CD4-positive, alpha-beta memory T cell (primary cell): ENCODE measurements at regions of chr19 and their contacts with region 1.

Region 1: GRCh38 chr19:18496167-18496979 is 25.5 kb downstream of the ELL start:
- DNase-seq: peak; percentile 75 to 96 (median 83)
- H3K4me3 ChIP-seq: peak overlapping the region; percentile 36 to 43
- H3K4me3 Mint-ChIP-seq: peak overlapping the region; percentile 77 to 86 (median 81)
- H3K27ac ChIP-seq: peak overlapping the region; percentile 90
- H3K27ac Mint-ChIP-seq: peak overlapping the region; percentile 95 to 98 (median 97)
- H3K4me1 ChIP-seq: peaks cover 96% of the 10 kb centered on the region
- H3K4me1 Mint-ChIP-seq: peaks cover 59 to 96% (median 81%) of the 10 kb centered on the region in 4 donors
- H3K27me3 ChIP-seq: no peaks in the 10 kb centered on the region
- H3K27me3 Mint-ChIP-seq: no peaks in the 10 kb centered on the region

Region 2: DNA sequence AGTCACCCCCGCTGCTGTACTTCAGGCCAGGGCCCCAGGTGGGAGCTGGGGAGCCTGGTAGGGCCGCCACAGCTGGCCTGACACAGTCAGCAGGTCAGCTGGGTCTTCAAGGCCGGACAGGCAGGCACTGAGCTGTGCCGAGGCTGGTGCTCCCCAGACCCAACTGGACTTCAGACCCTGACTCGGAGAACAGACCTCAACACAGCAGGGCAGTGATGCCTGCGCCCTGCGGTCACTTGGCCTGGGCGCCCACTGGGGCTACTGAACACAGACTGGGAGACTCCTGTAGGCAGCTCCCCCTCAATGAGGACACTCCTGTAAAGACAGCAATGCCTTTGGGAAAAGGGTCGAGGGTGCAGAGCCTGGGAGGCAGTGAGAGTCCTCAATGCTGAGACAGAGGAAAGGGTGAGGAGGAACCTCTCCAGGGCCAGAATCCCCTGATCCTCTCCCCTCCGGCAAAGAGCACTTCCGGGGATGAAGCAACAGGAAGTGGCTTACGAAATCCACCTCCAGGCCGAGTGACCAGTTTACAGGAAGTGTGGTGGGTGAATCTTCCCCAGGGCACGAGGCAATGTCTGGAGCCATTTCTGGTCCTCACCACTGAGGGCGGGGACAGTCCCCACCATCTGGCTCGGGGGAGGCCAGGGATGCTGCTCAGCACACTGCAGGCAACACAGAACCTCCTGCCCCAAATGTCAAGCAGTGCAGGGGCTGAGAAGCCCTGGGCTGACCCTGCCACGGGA is 17.6 kb before region 1 on chr19:
- CTCF ChIA-PET with region 1: interaction called, 7 read pairs
- POLR2A ChIA-PET with region 1: interaction called, 20 read pairs
- intact Hi-C with region 1: no loop called
- DNase-seq: peak in 3 of 5 donors; percentile 25 to 78 (median 33)
- H3K4me3 ChIP-seq: no peak overlapping the region
- H3K4me3 Mint-ChIP-seq: peak overlapping the region; percentile 53 to 80 (median 71)
- H3K27ac ChIP-seq: peak overlapping the region; percentile 63
- H3K27ac Mint-ChIP-seq: peak overlapping the region; percentile 89 to 95 (median 94)
- H3K4me1 ChIP-seq: peaks cover 88% of the 10 kb centered on the region
- H3K4me1 Mint-ChIP-seq: peaks cover 54 to 96% (median 78%) of the 10 kb centered on the region in 4 donors
- H3K27me3 ChIP-seq: no peaks in the 10 kb centered on the region
- H3K27me3 Mint-ChIP-seq: no peaks in the 10 kb centered on the region

Region 3: GRCh38 chr19:18484992-18485391 is 11.4 kb before region 1 on chr19:
- CTCF ChIA-PET with region 1: interaction called, 4 read pairs
- POLR2A ChIA-PET with region 1: interaction called, 21 read pairs
- intact Hi-C with region 1: no loop called
- DNase-seq: no peak
- H3K4me3 ChIP-seq: no peak overlapping the region
- H3K4me3 Mint-ChIP-seq: peak overlapping the region in 2 of 8 donors; percentile 13 to 15
- H3K27ac ChIP-seq: peak overlapping the region; percentile 13
- H3K27ac Mint-ChIP-seq: peak overlapping the region; percentile 41 to 90 (median 64)
- H3K4me1 ChIP-seq: peaks cover 82% of the 10 kb centered on the region
- H3K4me1 Mint-ChIP-seq: peaks cover 31 to 96% (median 72%) of the 10 kb centered on the region in 4 donors
- H3K27me3 ChIP-seq: no peaks in the 10 kb centered on the region
- H3K27me3 Mint-ChIP-seq: no peaks in the 10 kb centered on the region

Region 4: GRCh38 chr19:18510216-18510615 is 13.8 kb after region 1 on chr19:
- CTCF ChIA-PET with region 1: interaction called, 8 read pairs
- POLR2A ChIA-PET with region 1: interaction called, 56 read pairs
- intact Hi-C with region 1: no loop called
- DNase-seq: no peak
- H3K4me3 ChIP-seq: no peak overlapping the region
- H3K4me3 Mint-ChIP-seq: peak overlapping the region in 1 of 8 donors; percentile 30
- H3K27ac ChIP-seq: no peak overlapping the region
- H3K27ac Mint-ChIP-seq: peak overlapping the region in 6 of 7 donors; percentile 59 to 95 (median 72)
- H3K4me1 ChIP-seq: peaks cover 82% of the 10 kb centered on the region
- H3K4me1 Mint-ChIP-seq: peaks cover 48 to 88% (median 70%) of the 10 kb centered on the region in 4 donors
- H3K27me3 ChIP-seq: no peaks in the 10 kb centered on the region
- H3K27me3 Mint-ChIP-seq: no peaks in the 10 kb centered on the region

Region 5: GRCh38 chr19:18529782-18530181 is 33.4 kb after region 1 on chr19:
- CTCF ChIA-PET with region 1: no interaction called
- POLR2A ChIA-PET with region 1: no interaction called
- intact Hi-C with region 1: no loop called
- DNase-seq: no peak
- H3K4me3 ChIP-seq: no peak overlapping the region
- H3K4me3 Mint-ChIP-seq: no peak overlapping the region
- H3K27ac ChIP-seq: no peak overlapping the region
- H3K27ac Mint-ChIP-seq: no peak overlapping the region
- H3K4me1 ChIP-seq: no peaks in the 10 kb centered on the region
- H3K4me1 Mint-ChIP-seq: peaks cover 0 to 2% (median 0%) of the 10 kb centered on the region in 4 donors
- H3K27me3 ChIP-seq: no peaks in the 10 kb centered on the region
- H3K27me3 Mint-ChIP-seq: no peaks in the 10 kb centered on the region